ENCODE measurements at regions of chr5 and their contacts with region 1.

Region 1: GRCh38 chr5:55601204-55601618 is 66.4 kb upstream of the PLPP1 start:
- DNase-seq: peak; percentile 83 to 90 (median 87)
- ATAC-seq: peak; percentile 83 to 89 (median 87)
- H3K4me3 ChIP-seq: peak overlapping the region in 9 of 12 donors; percentile 24 to 47 (median 39)
- H3K27ac ChIP-seq: peak overlapping the region; percentile 82 to 99 (median 94)
- H3K4me1 ChIP-seq: peaks cover 22 to 85% (median 80%) of the 10 kb centered on the region in 12 donors
- H3K27me3 ChIP-seq: no peaks in the 10 kb centered on the region
- CTCF ChIP-seq: no peak
- POLR2A ChIP-seq: peak in 1 of 2 donors; percentile 45

Region 2: GRCh38 chr5:55421074-55421529 is 180.1 kb before region 1 on chr5:
- intact Hi-C with region 1: loop called in 1 of 10 experiments (anchors 10 kb)
- DNase-seq: no peak
- ATAC-seq: no peak
- H3K4me3 ChIP-seq: no peak overlapping the region
- H3K27ac ChIP-seq: peak overlapping the region in 3 of 12 donors; percentile 18 to 46 (median 21)
- H3K4me1 ChIP-seq: peaks cover 0 to 43% (median 15%) of the 10 kb centered on the region in 12 donors
- H3K27me3 ChIP-seq: no peaks in the 10 kb centered on the region
- CTCF ChIP-seq: no peak
- POLR2A ChIP-seq: no peak

Region 3: GRCh38 chr5:55467862-55468551 is 133.2 kb before region 1 on chr5:
- intact Hi-C with region 1: loop called in 1 of 10 experiments (anchors 10 kb)
- DNase-seq: no peak
- ATAC-seq: no peak
- H3K4me3 ChIP-seq: no peak overlapping the region
- H3K27ac ChIP-seq: peak overlapping the region in 8 of 12 donors; percentile 2 to 61 (median 34)
- H3K4me1 ChIP-seq: peaks cover 0 to 40% (median 30%) of the 10 kb centered on the region in 12 donors
- H3K27me3 ChIP-seq: no peaks in the 10 kb centered on the region
- CTCF ChIP-seq: no peak
- POLR2A ChIP-seq: no peak

Region 4: DNA sequence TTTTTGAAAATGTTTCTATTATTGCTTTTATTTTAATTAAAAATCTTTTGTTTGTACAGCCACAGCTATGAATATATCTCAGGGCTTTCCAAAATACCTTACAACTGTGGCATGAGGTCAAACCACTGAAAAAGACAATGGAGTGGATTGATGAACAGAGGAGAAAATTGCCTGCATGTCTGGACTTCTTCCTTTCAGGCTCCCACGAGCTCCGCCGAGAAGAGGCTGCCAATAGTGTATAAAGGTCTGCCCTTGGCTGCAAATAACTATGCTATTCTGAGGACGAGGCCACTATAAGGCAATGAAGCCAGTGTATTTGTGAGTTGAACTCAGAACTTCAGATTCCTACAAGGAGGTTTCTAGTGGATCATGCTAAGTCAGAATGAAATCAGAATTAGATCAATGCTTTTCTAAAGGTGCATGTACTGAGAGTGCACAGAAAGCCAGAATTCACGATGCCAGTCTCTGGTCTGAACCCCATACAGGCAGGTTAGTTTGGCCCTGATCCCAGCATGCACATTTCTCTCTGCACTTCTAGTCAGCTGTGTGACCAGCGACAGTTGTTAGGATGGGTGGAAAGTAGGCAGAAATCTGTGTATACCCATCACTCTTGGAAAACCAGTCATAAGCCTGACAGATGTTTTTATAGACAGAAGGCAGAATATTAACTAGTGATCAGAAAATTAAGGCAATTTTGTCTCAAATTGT is 23.7 kb before region 1 on chr5:
- intact Hi-C with region 1: loop called in 4 of 10 experiments (anchors 1 to 2 kb)
- DNase-seq: peak in 4 of 5 donors; percentile 77 to 84 (median 81)
- ATAC-seq: peak; percentile 91 to 94 (median 94)
- H3K4me3 ChIP-seq: no peak overlapping the region
- H3K27ac ChIP-seq: peak overlapping the region; percentile 71 to 90 (median 82)
- H3K4me1 ChIP-seq: peaks cover 6 to 53% (median 48%) of the 10 kb centered on the region in 12 donors
- H3K27me3 ChIP-seq: no peaks in the 10 kb centered on the region
- CTCF ChIP-seq: no peak
- POLR2A ChIP-seq: no peak

Region 5: GRCh38 chr5:55636683-55637082 is 35.5 kb after region 1 on chr5:
- intact Hi-C with region 1: loop called in 3 of 10 experiments (anchors 1 to 5 kb)
- DNase-seq: peak in 4 of 5 donors; percentile 44 to 68 (median 50)
- ATAC-seq: peak in 3 of 4 donors; percentile 54 to 61 (median 54)
- H3K4me3 ChIP-seq: no peak overlapping the region
- H3K27ac ChIP-seq: peak overlapping the region; percentile 25 to 87 (median 75)
- H3K4me1 ChIP-seq: peaks cover 7 to 53% (median 42%) of the 10 kb centered on the region in 12 donors
- H3K27me3 ChIP-seq: no peaks in the 10 kb centered on the region
- CTCF ChIP-seq: no peak
- POLR2A ChIP-seq: no peak

Region 6: GRCh38 chr5:55675119-55675518 is 73.9 kb after region 1 on chr5:
- intact Hi-C with region 1: loop called in 3 of 10 experiments (anchors 5 to 10 kb)
- DNase-seq: no peak
- ATAC-seq: no peak
- H3K4me3 ChIP-seq: no peak overlapping the region
- H3K27ac ChIP-seq: peak overlapping the region in 5 of 12 donors; percentile 1 to 53 (median 11)
- H3K4me1 ChIP-seq: peaks cover 0 to 39% (median 14%) of the 10 kb centered on the region in 12 donors
- H3K27me3 ChIP-seq: no peaks in the 10 kb centered on the region
- CTCF ChIP-seq: no peak
- POLR2A ChIP-seq: no peak

Region 7: GRCh38 chr5:55680353-55680752 is 79.1 kb after region 1 on chr5:
- intact Hi-C with region 1: loop called in 3 of 10 experiments (anchors 5 to 10 kb)
- DNase-seq: no peak
- ATAC-seq: peak in 1 of 4 donors; percentile 41
- H3K4me3 ChIP-seq: no peak overlapping the region
- H3K27ac ChIP-seq: peak overlapping the region in 6 of 12 donors; percentile 11 to 56 (median 27)
- H3K4me1 ChIP-seq: peaks cover 0 to 32% (median 16%) of the 10 kb centered on the region in 12 donors
- H3K27me3 ChIP-seq: no peaks in the 10 kb centered on the region
- CTCF ChIP-seq: no peak
- POLR2A ChIP-seq: no peak